Cardiac septum (tissue), 1 donor: ENCODE measurements at regions of chr4 and their contacts with region 1.

Region 1: DNA sequence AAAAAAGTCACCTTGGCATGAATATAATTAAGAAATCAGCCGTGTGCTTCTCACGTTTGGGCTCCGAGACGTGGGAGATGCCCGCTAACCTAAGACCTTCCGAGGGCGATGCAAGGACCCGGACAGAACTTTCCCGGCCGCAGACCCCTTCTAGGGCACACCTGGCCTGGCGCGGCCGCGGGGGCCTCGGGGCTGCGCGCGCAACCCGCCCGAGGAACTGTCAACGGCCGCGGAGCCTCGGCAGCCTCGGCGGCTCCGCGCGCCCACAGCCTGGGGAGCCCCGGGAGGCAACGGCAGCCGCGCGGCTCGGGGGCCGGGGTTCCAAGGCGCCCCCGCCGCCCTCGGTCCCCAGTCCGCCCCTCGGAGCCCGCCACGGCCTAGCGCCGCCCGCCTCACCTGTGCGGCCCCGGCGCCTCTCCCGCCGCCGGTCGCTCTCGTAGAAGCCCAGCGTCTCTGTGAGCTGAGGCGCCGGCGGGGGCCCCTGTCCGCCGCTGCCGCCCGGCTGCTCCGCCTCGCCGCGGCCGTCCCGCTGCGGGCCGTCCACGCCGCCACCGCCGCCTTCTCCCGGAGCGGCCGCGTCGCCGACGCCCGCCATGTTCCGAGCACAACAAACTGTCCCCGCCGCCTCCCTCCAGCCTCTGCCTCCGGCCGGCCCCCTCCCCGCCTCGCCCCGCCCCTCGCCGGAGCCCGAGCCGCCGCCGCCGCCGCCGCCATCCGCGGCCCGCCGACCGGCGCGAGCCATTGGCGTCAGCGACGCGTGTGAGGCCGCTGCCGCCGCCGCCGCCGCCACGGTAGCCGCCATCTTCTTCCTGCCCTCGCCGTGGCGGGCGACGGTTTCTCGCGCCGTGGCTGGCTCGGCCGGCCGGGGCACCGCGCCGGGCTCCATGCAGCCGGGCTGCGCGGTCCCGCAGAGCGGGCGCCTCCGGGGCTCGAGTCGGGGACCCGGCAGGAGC is at the start of gene TAPT1:
- DNase-seq: peak; percentile 93
- total RNA-seq, gene TAPT1: 44.8 TPM

Region 2: GRCh38 chr4:15018361-15018760 is 1207.8 kb before region 1 on chr4:
- intact Hi-C with region 1: loop called (anchors 10 kb)
- DNase-seq: no peak

Region 3: DNA sequence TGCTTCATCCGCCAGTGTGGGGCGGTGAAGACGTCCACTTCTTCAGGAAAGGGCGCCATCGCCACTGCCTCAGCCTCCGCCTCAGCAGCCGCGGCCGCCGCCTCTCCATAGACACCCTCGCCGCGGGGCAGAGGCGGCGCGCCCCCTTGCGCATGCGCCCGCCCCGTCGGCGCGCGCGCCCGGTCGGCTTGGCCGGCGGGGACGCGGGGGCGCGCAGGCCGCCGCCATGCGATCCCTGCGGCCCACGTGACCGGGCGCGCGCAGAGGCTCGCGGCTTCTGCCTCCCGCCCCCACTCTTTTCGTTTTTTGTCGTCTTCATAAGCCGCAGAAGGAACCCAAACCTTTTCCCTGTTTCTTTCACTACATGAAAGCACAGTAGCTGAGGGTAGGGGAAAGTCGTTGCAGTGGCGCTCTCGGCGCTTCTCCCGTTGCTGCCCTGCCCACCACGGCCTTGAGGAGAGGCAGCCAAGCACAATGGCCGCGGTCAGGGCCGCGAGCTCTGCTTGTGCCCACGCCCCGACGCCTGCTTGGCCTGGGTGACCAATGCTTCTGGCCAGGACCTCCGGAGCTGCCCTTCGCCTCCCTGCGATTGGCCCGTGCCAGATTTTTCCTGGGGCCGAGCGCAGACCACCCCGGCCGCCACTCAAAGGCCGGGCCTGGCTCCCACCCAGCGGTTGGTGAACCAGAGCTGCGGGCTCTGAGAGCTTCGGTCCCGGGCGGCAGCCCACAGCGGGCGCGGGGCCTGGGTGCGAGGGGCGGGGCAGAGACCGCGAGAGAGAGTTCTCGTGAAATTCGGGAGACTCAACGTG is 570.7 kb before region 1 on chr4 and contains the start of gene FBXL5:
- intact Hi-C with region 1: loop called (anchors 10 kb)
- DNase-seq: peak; percentile 92
- total RNA-seq, gene FBXL5: 60.9 TPM

Region 4: GRCh38 chr4:15990570-15991285 is 235.4 kb before region 1 on chr4:
- intact Hi-C with region 1: no loop called
- DNase-seq: no peak

Region 5: DNA sequence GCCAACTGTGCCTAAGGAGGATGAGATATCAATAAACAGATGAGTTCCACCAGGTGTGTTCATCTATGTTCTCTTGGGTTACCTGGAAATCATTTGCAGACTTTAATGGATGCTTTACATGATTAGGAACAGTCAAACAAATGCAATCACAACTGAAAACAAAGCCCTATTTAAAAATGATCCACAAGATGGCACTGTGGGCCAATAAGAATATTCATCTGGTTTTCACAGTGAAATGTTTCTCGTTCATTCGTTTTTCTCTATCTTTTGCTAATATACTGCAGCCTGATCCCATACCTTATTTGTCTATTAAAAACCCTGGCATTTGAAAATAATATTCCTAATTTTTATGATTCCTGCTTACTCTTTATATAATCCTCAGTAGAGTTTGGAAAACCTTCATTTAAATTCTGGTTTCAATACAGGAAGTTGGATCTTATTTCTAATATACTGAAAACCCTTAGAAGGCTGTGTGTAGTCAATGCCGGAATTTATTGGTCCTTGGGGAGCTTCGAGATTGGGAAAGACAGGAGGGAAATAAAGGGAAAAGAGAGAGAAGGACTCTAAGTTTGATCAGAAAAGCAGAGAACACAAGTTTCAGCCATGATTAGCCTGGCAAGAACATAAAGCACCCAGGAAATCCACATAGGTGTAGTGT is 63.9 kb after region 1 on chr4:
- intact Hi-C with region 1: no loop called
- DNase-seq: no peak